CD14-positive monocyte (primary cell): ENCODE measurements at regions of chr12 and their contacts with region 1.

Region 1: DNA sequence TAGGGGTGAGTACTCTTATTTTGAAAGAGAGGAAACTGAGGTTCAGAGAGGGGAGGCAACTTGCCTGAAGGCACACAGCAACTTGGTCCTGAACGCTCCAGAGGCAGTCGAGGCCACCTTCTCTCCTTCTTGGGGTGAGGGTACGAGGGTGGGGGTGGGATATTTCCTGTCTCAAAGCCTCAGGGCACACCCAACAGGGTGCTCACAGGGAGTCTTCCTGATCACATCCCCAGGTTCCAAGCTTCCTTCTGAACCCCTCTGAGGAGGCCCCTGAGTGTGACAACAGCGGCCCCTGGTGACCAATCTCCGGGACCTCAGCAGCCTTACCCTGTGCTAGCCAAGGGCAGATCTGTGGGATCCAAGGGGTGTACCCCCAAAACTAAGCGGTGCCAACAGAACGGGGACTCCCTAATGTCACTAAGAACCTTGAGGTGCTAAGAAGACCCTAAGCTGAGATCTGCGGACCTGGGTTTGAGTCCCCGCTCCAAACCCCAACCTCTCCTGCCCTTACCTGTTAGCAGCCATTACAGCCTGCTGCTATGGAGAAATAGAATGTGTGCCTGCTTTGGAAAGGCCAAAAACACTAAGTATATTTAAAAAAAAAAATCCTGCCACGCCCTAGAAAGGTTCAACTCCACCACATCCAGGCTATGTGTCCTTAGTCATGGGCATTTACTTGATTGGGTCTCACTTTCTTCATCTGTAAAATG is 57.9 kb downstream of the TRPV4 start:
- DNase-seq: peak; percentile 47 to 61 (median 59)
- H3K4me3 ChIP-seq: no peak overlapping the region
- H3K4me3 Mint-ChIP-seq: no peak overlapping the region
- H3K27ac ChIP-seq: no peak overlapping the region
- H3K27ac Mint-ChIP-seq: no peak overlapping the region
- H3K4me1 ChIP-seq: no peaks in the 10 kb centered on the region
- H3K4me1 Mint-ChIP-seq: peaks cover 16% of the 10 kb centered on the region
- H3K27me3 ChIP-seq: no peaks in the 10 kb centered on the region
- H3K27me3 Mint-ChIP-seq: peaks cover 0 to 8% (median 7%) of the 10 kb centered on the region in 3 donors
- CTCF ChIP-seq: peak; percentile 87

Region 2: DNA sequence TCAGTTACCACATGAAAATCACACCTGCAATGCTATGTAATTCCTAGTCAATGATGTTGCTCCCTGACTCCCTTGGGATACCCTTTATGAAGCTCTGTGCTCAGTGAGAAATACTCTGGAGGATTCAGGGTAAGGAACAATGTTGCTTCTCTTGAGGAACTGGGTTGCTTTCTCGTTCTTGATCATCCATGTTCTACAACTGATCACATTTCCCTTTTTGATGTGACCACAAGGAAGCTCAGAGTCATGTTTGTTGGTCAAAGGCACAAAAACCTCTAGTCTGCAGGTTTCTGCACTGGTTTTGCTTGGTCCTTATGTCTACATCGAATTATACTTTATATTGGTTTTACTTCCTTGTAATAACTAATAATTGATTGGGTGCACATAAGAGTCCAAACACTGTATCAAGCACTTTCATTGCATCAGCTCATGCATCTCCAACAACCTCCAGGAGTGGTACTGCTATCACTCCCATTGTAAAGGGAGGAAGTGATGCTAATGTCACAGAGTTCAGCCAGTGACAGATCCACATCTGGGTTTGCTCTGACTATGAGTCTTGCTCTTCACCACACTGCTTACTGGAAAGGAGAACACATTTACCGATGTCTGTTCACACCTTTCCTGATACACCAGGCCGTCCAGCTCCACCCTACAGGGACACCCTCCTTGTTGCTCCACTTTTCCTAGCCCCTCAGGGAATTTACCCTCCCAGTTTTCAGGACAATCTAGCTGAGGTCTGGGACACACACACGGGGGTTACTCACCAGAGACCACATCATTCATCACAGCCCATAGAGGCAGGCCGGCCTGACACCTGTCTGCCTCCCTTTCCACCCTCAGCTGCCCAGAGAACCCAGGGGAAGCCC is 1477.2 kb before region 1 on chr12:
- intact Hi-C with region 1: no loop called
- DNase-seq: peak; percentile 30 to 56 (median 36)
- H3K4me3 ChIP-seq: no peak overlapping the region
- H3K4me3 Mint-ChIP-seq: peak overlapping the region in 1 of 2 donors; percentile 52
- H3K27ac ChIP-seq: peak overlapping the region; percentile 26 to 72
- H3K27ac Mint-ChIP-seq: peak overlapping the region; percentile 55 to 91 (median 79)
- H3K4me1 ChIP-seq: peaks cover 42 to 55% of the 10 kb centered on the region in 2 donors
- H3K4me1 Mint-ChIP-seq: peaks cover 60% of the 10 kb centered on the region
- H3K27me3 ChIP-seq: peaks cover 0 to 2% of the 10 kb centered on the region in 2 donors
- H3K27me3 Mint-ChIP-seq: peaks cover 2 to 12% (median 4%) of the 10 kb centered on the region in 3 donors
- CTCF ChIP-seq: no peak

Region 3: GRCh38 chr12:109428037-109428629 is 347.2 kb before region 1 on chr12:
- intact Hi-C with region 1: loop called (anchors 2 kb)
- DNase-seq: peak; percentile 63 to 76 (median 68)
- H3K4me3 ChIP-seq: no peak overlapping the region
- H3K4me3 Mint-ChIP-seq: no peak overlapping the region
- H3K27ac ChIP-seq: no peak overlapping the region
- H3K27ac Mint-ChIP-seq: no peak overlapping the region
- H3K4me1 ChIP-seq: no peaks in the 10 kb centered on the region
- H3K4me1 Mint-ChIP-seq: peaks cover 3% of the 10 kb centered on the region
- H3K27me3 ChIP-seq: no peaks in the 10 kb centered on the region
- H3K27me3 Mint-ChIP-seq: peaks cover 3 to 9% (median 8%) of the 10 kb centered on the region in 3 donors
- CTCF ChIP-seq: peak; percentile 96

Region 4: GRCh38 chr12:109518820-109519665 is 256.3 kb before region 1 on chr12:
- intact Hi-C with region 1: loop called (anchors 1 to 2 kb)
- DNase-seq: peak; percentile 12 to 34 (median 34)
- H3K4me3 ChIP-seq: no peak overlapping the region
- H3K4me3 Mint-ChIP-seq: no peak overlapping the region
- H3K27ac ChIP-seq: no peak overlapping the region
- H3K27ac Mint-ChIP-seq: peak overlapping the region in 2 of 7 donors; percentile 33 to 35
- H3K4me1 ChIP-seq: no peaks in the 10 kb centered on the region
- H3K4me1 Mint-ChIP-seq: no peaks in the 10 kb centered on the region
- H3K27me3 ChIP-seq: no peaks in the 10 kb centered on the region
- H3K27me3 Mint-ChIP-seq: no peaks in the 10 kb centered on the region
- CTCF ChIP-seq: peak; percentile 79

Region 5: DNA sequence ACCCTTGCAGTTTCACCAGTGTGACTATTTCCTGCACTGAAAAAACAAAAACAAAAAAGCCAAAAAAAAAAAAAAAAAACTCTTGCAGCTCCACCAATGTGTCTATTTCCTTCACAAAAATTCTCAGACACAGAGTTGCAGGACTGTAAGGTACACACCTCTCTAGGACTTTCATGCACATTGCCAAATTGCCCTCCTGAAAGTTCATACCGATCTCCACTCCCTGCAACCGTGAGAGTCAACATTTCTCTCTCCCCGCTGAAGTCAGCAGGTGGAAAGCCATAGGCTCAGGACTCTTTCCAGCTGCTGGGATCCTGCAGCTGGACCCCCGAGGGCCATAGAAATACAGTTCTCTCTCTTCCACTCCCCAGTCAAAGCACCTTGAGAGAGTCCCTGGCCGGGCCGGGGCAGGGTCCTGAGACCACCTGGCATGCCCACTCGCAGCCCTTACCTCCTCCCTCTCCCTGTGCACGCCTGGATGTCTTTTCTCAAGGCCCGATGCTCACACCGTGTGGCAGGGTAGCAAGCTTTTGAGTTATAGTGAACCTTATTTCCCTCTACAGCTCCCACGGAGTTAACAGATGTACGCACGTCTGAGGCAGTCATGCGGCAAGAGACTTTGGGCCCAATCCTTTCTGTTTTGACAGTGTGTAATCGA is 225.6 kb before region 1 on chr12:
- intact Hi-C with region 1: no loop called
- DNase-seq: no peak
- H3K4me3 ChIP-seq: no peak overlapping the region
- H3K4me3 Mint-ChIP-seq: no peak overlapping the region
- H3K27ac ChIP-seq: no peak overlapping the region
- H3K27ac Mint-ChIP-seq: peak overlapping the region in 1 of 7 donors; percentile 70
- H3K4me1 ChIP-seq: no peaks in the 10 kb centered on the region
- H3K4me1 Mint-ChIP-seq: peaks cover 6% of the 10 kb centered on the region
- H3K27me3 ChIP-seq: peaks cover 0 to 6% of the 10 kb centered on the region in 2 donors
- H3K27me3 Mint-ChIP-seq: peaks cover 10 to 24% (median 17%) of the 10 kb centered on the region in 3 donors
- CTCF ChIP-seq: no peak

Region 6: DNA sequence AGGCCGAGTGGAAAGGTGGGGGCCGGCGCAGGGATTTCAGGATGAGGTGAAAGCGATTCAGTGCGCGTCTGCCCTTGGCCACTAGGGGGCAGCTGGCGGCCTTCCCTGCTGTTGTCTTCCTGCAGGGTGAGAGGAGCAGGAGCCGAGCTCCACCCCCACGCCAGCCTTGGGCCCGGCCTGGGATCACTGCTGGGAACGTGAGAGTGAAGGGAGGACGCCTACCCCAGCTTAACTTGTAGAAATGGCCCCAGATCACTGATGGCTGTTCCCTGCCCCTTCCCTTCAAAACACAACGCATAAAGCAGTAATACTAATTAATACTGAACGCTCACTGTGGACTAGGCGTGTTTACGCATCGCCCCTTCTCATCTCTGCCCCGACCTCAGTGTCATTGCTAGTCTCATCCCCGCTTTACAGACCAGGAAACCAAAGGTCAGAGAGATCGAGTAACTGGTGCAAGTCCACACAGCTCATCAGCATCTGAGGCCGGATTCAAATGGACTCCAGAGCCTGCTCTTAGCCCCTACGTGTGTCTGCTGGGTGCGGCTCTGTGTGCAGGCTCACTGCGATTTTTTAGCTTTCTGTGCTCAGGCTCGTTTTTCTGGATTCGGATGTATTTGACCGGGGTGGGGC is 177.4 kb before region 1 on chr12:
- intact Hi-C with region 1: loop called (anchors 1 to 2 kb)
- DNase-seq: peak; percentile 34 to 58 (median 54)
- H3K4me3 ChIP-seq: no peak overlapping the region
- H3K4me3 Mint-ChIP-seq: no peak overlapping the region
- H3K27ac ChIP-seq: no peak overlapping the region
- H3K27ac Mint-ChIP-seq: peak overlapping the region in 2 of 7 donors; percentile 14 to 22
- H3K4me1 ChIP-seq: peaks cover 13 to 19% of the 10 kb centered on the region in 2 donors
- H3K4me1 Mint-ChIP-seq: peaks cover 22% of the 10 kb centered on the region
- H3K27me3 ChIP-seq: no peaks in the 10 kb centered on the region
- H3K27me3 Mint-ChIP-seq: peaks cover 3 to 17% (median 14%) of the 10 kb centered on the region in 3 donors
- CTCF ChIP-seq: peak; percentile 95

Region 7: GRCh38 chr12:109818905-109819500 is 43.7 kb after region 1 on chr12:
- intact Hi-C with region 1: no loop called
- DNase-seq: no peak
- H3K4me3 ChIP-seq: no peak overlapping the region
- H3K4me3 Mint-ChIP-seq: no peak overlapping the region
- H3K27ac ChIP-seq: no peak overlapping the region
- H3K27ac Mint-ChIP-seq: peak overlapping the region in 2 of 7 donors; percentile 61 to 73
- H3K4me1 ChIP-seq: peaks cover 29% of the 10 kb centered on the region in 2 donors
- H3K4me1 Mint-ChIP-seq: peaks cover 35% of the 10 kb centered on the region
- H3K27me3 ChIP-seq: no peaks in the 10 kb centered on the region
- H3K27me3 Mint-ChIP-seq: peaks cover 7 to 10% (median 10%) of the 10 kb centered on the region in 3 donors
- CTCF ChIP-seq: no peak